Activated CD4-positive, alpha-beta T cell treated with anti-CD3 and anti-CD28 coated beads for 36 hours (primary cell): ENCODE measurements at regions of chr16 and their contacts with region 1.

Region 1: DNA sequence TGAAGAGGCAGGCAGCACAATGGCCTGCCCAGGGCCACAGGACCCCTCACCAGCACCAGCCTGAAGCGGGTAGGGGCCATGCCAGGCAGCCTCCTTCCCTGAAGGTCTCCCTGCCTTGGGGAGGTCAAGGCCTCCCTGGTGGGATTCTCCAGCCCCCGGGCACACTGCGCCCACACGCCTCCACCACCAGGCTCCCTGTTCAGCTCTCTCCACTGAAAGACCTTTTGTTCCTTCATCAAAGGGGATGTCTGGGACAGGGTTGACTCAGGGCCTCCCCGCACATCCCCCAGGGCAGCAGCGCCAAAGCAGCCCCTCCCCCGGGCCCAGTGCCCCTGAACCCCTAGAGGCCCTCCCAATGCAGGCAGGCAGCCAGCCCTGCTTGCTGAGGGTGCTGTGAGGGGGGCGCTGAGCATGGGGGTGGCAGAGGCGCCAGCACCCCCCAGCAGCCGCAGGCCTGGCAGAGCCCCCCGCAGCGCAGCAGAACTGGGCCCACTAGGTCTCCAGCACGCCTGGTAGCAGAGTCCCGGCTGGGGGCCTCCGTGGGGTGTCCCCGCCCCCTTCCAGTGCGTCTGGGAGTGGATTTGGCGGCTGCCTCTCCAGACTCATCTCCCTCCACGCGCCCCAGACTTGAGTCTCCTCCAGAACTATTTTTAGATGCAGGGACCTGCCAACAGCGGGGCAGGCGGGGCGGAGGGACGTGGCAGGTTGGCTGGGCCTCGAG is 13.1 kb downstream of the BCAR1 start:
- DNase-seq: no peak
- ATAC-seq: no peak
- H3K4me3 Mint-ChIP-seq: no peak overlapping the region
- H3K27ac Mint-ChIP-seq: no peak overlapping the region
- H3K4me1 Mint-ChIP-seq: peaks cover 2% of the 10 kb centered on the region
- H3K27me3 Mint-ChIP-seq: no peaks in the 10 kb centered on the region

Region 2: GRCh38 chr16:74771656-74772315 is 466.5 kb before region 1 on chr16:
- CTCF ChIA-PET with region 1: no interaction called
- POLR2A ChIA-PET with region 1: no interaction called
- intact Hi-C with region 1: no loop called
- DNase-seq: no peak
- ATAC-seq: no peak
- H3K4me3 Mint-ChIP-seq: no peak overlapping the region
- H3K27ac Mint-ChIP-seq: no peak overlapping the region
- H3K4me1 Mint-ChIP-seq: peaks cover 6% of the 10 kb centered on the region
- H3K27me3 Mint-ChIP-seq: peaks cover 38% of the 10 kb centered on the region

Region 3: DNA sequence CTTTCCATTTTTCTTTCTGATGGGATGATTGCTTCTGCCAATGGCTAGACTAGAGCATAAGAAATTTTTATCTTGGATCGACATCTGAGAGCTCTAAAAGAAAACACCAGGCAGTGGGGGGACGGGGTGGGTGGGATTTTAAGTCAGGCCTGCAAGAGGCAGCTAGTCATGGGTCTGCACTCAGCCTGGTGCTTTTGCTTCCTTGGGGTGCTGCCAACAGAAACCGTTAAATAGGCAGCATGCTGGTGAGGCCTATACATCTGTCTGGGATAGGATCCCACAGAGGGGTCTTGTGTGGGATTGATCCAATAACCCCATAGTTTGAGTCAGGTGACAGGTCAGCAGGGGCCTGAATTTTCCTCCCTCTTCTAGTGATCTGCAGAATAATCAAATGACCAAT is 212.5 kb before region 1 on chr16:
- CTCF ChIA-PET with region 1: no interaction called
- POLR2A ChIA-PET with region 1: no interaction called
- intact Hi-C with region 1: no loop called
- DNase-seq: no peak
- ATAC-seq: no peak
- H3K4me3 Mint-ChIP-seq: no peak overlapping the region
- H3K27ac Mint-ChIP-seq: no peak overlapping the region
- H3K4me1 Mint-ChIP-seq: peaks cover 33% of the 10 kb centered on the region
- H3K27me3 Mint-ChIP-seq: no peaks in the 10 kb centered on the region

Region 4: GRCh38 chr16:75198135-75198600 is 40.1 kb before region 1 on chr16:
- CTCF ChIA-PET with region 1: interaction called, 34 read pairs
- POLR2A ChIA-PET with region 1: no interaction called
- intact Hi-C with region 1: loop called (anchors 5 kb)
- DNase-seq: no peak
- ATAC-seq: no peak
- H3K4me3 Mint-ChIP-seq: no peak overlapping the region
- H3K27ac Mint-ChIP-seq: no peak overlapping the region
- H3K4me1 Mint-ChIP-seq: peaks cover 8% of the 10 kb centered on the region
- H3K27me3 Mint-ChIP-seq: peaks cover 10% of the 10 kb centered on the region

Region 5: DNA sequence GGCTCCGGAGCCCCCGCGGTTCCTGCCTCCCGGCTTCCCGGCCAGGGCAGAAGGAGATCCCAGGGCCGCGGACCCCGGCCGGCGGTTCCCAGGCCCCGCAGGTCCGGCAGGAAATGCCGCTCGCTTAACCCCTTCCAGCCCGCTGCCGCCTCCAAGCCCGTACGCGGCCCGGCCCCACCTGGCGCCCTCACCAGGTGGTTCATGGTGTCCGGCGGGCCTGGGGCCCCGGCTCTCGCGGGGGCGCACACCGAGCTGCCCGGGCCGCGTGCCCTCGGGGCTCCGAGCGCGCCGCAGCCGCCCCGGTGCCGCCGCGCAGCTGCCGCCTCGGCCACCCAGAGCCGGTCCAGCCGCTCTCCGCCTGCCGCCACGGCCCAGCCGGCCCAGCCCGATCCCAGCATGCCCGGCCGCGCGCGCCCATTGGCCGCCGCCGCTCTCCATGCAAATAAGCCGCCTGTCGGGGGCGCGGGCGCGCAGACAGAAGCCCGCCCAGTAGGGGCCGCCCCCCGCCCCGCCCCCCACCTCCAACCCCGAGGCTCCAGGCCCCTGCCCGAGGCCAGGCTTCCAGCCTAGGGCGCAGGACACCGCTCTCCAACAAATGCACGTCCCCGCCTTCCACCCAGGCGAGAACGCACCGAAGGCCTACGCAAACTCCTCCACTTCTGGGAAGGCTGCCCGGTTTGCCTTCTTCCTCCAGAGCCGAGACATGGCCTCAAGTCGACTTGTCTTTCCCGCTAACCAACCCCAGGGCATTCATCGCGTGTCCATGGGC is 13.2 kb after region 1 on chr16 and contains the start of gene BCAR1:
- CTCF ChIA-PET with region 1: interaction called, 10 read pairs
- POLR2A ChIA-PET with region 1: no interaction called
- intact Hi-C with region 1: no loop called
- DNase-seq: peak; percentile 44
- ATAC-seq: peak; percentile 54
- H3K4me3 Mint-ChIP-seq: peak within 1 kb of the TSS; percentile 29
- H3K27ac Mint-ChIP-seq: no peak within 1 kb of the TSS
- H3K4me1 Mint-ChIP-seq: peaks cover 6% of the 10 kb centered on the region
- H3K27me3 Mint-ChIP-seq: peaks cover 25% of the 10 kb centered on the region
- total RNA-seq, gene BCAR1: 0.98 to 1.7 TPM

Region 6: DNA sequence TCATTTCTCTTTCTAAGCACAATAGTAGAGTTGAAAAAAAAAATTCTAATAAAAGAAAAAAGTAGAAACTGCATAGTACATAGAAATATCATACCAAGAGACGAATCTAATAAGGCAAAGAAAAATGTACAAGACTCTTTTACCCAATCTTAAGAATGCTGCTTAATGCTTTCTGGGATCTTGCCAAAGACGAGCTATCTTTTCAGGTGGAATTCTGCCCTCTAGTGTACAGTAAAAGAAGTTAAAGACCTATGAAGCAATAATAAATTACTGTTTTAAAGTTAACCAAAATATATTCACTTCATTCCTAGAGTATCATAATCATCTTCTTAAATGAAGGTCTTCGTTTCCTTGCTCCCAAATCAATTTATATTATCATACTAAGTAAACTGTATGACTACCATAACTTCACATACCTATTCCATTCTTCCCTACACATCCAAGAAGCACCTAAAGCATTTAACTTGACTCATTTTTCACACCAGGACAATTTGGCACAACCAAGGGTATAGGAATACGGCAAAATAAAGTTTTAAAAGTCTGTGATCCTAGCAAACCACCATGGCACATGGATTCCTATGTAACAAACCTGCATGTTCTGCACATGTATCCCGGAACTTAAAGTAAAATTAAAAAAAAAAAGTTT is 147.3 kb after region 1 on chr16:
- CTCF ChIA-PET with region 1: interaction called, 90 read pairs
- POLR2A ChIA-PET with region 1: no interaction called
- intact Hi-C with region 1: loop called (anchors 1 kb)
- DNase-seq: no peak
- ATAC-seq: peak; percentile 47
- H3K4me3 Mint-ChIP-seq: no peak overlapping the region
- H3K27ac Mint-ChIP-seq: no peak overlapping the region
- H3K4me1 Mint-ChIP-seq: peaks cover 18% of the 10 kb centered on the region
- H3K27me3 Mint-ChIP-seq: peaks cover 2% of the 10 kb centered on the region

Region 7: GRCh38 chr16:75464130-75464918 is 226.0 kb after region 1 on chr16 and contains the start of gene TMEM170A:
- CTCF ChIA-PET with region 1: interaction called, 3 read pairs
- POLR2A ChIA-PET with region 1: no interaction called
- intact Hi-C with region 1: loop called in 1 of 2 experiments (anchors 1 kb)
- DNase-seq: peak; percentile 100
- ATAC-seq: peak; percentile 94
- H3K4me3 Mint-ChIP-seq: peak within 1 kb of the TSS; percentile 98
- H3K27ac Mint-ChIP-seq: peak within 1 kb of the TSS; percentile 94
- H3K4me1 Mint-ChIP-seq: peaks cover 45% of the 10 kb centered on the region
- H3K27me3 Mint-ChIP-seq: no peaks in the 10 kb centered on the region
- total RNA-seq, gene TMEM170A: 22.0 to 30.5 TPM